Activated B cell treated with CpG ODN at 0.5 μM for 24 hours (primary cell): ENCODE measurements at regions of chr6 and their contacts with region 1.

Region 1: GRCh38 chr6:3813150-3813780 is 35.9 kb upstream of the FAM50B start:
- DNase-seq: no peak
- ATAC-seq: no peak
- H3K4me3 Mint-ChIP-seq: no peak overlapping the region
- H3K27ac Mint-ChIP-seq: no peak overlapping the region
- H3K4me1 Mint-ChIP-seq: peaks cover 2% of the 10 kb centered on the region
- H3K27me3 Mint-ChIP-seq: no peaks in the 10 kb centered on the region
- CTCF ChIP-seq: no peak

Region 2: GRCh38 chr6:3887150-3887700 is 74.0 kb after region 1 on chr6:
- CTCF ChIA-PET with region 1: no interaction called
- POLR2A ChIA-PET with region 1: no interaction called
- intact Hi-C with region 1: loop called (anchors 2 kb)
- DNase-seq: no peak
- ATAC-seq: no peak
- H3K4me3 Mint-ChIP-seq: no peak overlapping the region
- H3K27ac Mint-ChIP-seq: no peak overlapping the region
- H3K4me1 Mint-ChIP-seq: no peaks in the 10 kb centered on the region
- H3K27me3 Mint-ChIP-seq: peaks cover 9% of the 10 kb centered on the region
- CTCF ChIP-seq: no peak